HCT116 (cell line): ENCODE measurements at regions of chr10 and their contacts with region 1.

Region 1: DNA sequence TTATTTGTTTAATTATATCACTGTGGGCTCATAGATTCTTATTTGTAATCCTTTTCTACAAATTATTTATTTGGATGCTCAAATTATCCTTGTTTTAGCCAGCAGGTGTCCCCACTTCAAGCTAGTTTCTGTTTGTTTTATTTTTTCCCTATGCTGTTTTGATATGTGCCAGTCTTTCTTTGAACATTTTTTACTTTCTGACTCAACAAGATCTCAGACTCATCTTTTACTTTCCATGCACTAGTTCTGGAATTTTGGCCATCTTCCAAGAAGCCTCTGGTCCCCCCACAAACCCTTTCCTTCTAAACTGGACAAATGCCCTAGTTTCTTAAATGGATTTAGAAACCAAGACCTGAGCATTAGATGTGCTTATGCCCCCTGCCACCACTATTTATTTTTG is 11.5 kb upstream of the MRPS16 start:
- DNase-seq: no peak
- ATAC-seq: peak; percentile 35; the same call in 1 of the 2 replicates
- H3K4me3 ChIP-seq: no peak overlapping the region
- H3K27ac ChIP-seq: no peak overlapping the region
- H3K4me1 ChIP-seq: peaks cover 13 to 23% of the 10 kb centered on the region in 2 experiments
- H3K27me3 ChIP-seq: no peaks in the 10 kb centered on the region
- CTCF ChIP-seq: peak; percentile 51 to 71 (median 52); a peak in 4 of 6 replicates
- POLR2A ChIP-seq: no peak
- RAD21 ChIP-seq: peak; percentile 72

Region 2: GRCh38 chr10:72913287-72913686 is 350.7 kb before region 1 on chr10:
- CTCF ChIA-PET with region 1: no interaction called
- POLR2A ChIA-PET with region 1: no interaction called
- RAD21 ChIA-PET with region 1: no interaction called
- intact Hi-C with region 1: no loop called
- DNase-seq: no peak
- ATAC-seq: no peak
- H3K4me3 ChIP-seq: no peak overlapping the region
- H3K27ac ChIP-seq: no peak overlapping the region
- H3K4me1 ChIP-seq: no peaks in the 10 kb centered on the region
- H3K27me3 ChIP-seq: no peaks in the 10 kb centered on the region
- CTCF ChIP-seq: no peak
- POLR2A ChIP-seq: no peak
- RAD21 ChIP-seq: no peak

Region 3: GRCh38 chr10:73239908-73240307 is 24.0 kb before region 1 on chr10:
- CTCF ChIA-PET with region 1: no interaction called
- POLR2A ChIA-PET with region 1: no interaction called
- RAD21 ChIA-PET with region 1: no interaction called
- intact Hi-C with region 1: no loop called
- DNase-seq: no peak
- ATAC-seq: no peak
- H3K4me3 ChIP-seq: no peak overlapping the region
- H3K27ac ChIP-seq: no peak overlapping the region
- H3K4me1 ChIP-seq: no peaks in the 10 kb centered on the region
- H3K27me3 ChIP-seq: no peaks in the 10 kb centered on the region
- CTCF ChIP-seq: no peak
- POLR2A ChIP-seq: no peak
- RAD21 ChIP-seq: no peak

Region 4: GRCh38 chr10:73252445-73253224 is 11.3 kb before region 1 on chr10 and contains the start of gene MRPS16:
- CTCF ChIA-PET with region 1: interaction called, 5 read pairs
- POLR2A ChIA-PET with region 1: interaction called, 16 read pairs
- RAD21 ChIA-PET with region 1: no interaction called
- intact Hi-C with region 1: no loop called
- DNase-seq: peak; percentile 93
- ATAC-seq: peak; percentile 79
- H3K4me3 ChIP-seq: peak within 1 kb of the TSS; percentile 83 to 100
- H3K27ac ChIP-seq: peak within 1 kb of the TSS; percentile 69
- H3K4me1 ChIP-seq: peaks cover 17 to 39% of the 10 kb centered on the region in 2 experiments
- H3K27me3 ChIP-seq: no peaks in the 10 kb centered on the region
- CTCF ChIP-seq: no peak
- POLR2A ChIP-seq: peak; percentile 95
- RAD21 ChIP-seq: no peak
- total RNA-seq, gene MRPS16: 122 TPM

Region 5: DNA sequence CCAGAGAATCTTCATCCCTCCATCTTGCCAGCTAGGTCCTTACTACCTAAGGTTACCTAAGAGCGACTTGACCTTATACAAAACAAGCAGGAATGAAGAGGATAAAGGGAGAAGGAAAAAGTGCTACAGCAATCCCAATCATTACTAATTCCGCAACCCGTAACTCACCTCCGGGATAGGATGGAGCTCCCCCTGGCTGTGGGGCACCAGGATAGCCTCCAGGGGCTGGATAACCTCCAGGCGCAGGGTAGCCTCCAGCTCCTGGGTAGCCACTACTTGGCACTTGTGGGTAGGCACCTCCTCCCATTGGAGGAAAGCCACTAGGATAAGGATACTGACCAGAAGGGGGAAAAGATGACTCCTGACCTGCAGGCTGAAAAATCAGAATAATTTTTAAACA is 134.1 kb after region 1 on chr10:
- CTCF ChIA-PET with region 1: interaction called, 3 read pairs
- POLR2A ChIA-PET with region 1: no interaction called
- RAD21 ChIA-PET with region 1: no interaction called
- intact Hi-C with region 1: loop called (anchors 10 kb)
- DNase-seq: no peak
- ATAC-seq: peak; percentile 89
- H3K4me3 ChIP-seq: no peak overlapping the region
- H3K27ac ChIP-seq: no peak overlapping the region
- H3K4me1 ChIP-seq: no peaks in the 10 kb centered on the region
- H3K27me3 ChIP-seq: no peaks in the 10 kb centered on the region
- CTCF ChIP-seq: peak; percentile 22 to 71 (median 64); a peak in 4 of 6 replicates
- POLR2A ChIP-seq: no peak
- RAD21 ChIP-seq: peak; percentile 45; the same call in 1 of the 2 replicates

Region 6: GRCh38 chr10:73495884-73496674 is 232.1 kb after region 1 on chr10 and contains the start of gene PPP3CB:
- CTCF ChIA-PET with region 1: no interaction called
- POLR2A ChIA-PET with region 1: no interaction called
- RAD21 ChIA-PET with region 1: no interaction called
- intact Hi-C with region 1: loop called (anchors 5 kb)
- DNase-seq: peak; percentile 94
- ATAC-seq: peak; percentile 87
- H3K4me3 ChIP-seq: peak within 1 kb of the TSS; percentile 94 to 98
- H3K27ac ChIP-seq: peak within 1 kb of the TSS; percentile 97
- H3K4me1 ChIP-seq: peaks cover 13 to 21% of the 10 kb centered on the region in 2 experiments; a peak in 3 of 4 replicates
- H3K27me3 ChIP-seq: no peaks in the 10 kb centered on the region
- CTCF ChIP-seq: no peak
- POLR2A ChIP-seq: no peak
- RAD21 ChIP-seq: no peak
- total RNA-seq, gene PPP3CB: 32.0 TPM

Region 7: DNA sequence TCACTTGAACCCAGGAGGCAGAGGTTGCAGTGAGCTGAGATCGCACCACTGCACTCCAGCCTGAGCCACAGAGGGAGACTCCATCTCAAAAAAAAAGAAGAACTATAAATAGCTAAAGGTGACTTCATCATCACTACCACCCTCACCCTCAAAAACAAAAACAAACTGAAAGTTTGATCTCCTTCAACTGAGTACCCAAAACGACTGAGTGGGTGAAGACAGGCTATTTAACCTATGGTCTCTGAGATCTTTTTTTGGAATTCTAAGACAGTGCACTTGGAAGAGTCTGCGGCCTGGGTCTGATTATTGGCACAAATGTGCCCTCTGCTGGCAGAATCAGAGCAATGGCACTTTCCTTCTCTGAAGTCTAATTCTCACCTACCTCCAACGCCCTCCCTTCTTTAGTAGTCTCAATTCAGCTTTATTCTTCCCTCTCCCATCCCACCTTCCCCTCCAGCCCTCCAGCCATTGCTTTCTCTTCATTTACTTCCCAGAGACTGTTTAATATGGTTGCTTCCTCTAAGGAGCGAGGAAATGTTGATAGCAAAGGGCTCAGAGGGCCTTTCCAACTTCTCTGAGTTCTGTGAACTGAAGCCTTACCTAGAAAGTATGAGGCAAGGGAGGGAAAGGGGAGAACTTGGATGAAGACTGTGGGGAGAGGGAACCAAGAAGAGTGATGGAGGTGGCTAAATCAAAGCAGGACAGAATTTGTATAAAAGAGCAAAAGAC is 380.2 kb after region 1 on chr10:
- CTCF ChIA-PET with region 1: interaction called, 6 read pairs
- POLR2A ChIA-PET with region 1: no interaction called
- RAD21 ChIA-PET with region 1: interaction called in 1 of 2 experiments, 3 read pairs
- intact Hi-C with region 1: loop called (anchors 5 kb)
- DNase-seq: peak; percentile 58
- ATAC-seq: peak; percentile 93
- H3K4me3 ChIP-seq: no peak overlapping the region
- H3K27ac ChIP-seq: no peak overlapping the region
- H3K4me1 ChIP-seq: peaks cover 0 to 9% of the 10 kb centered on the region in 2 experiments; a peak in 3 of 4 replicates
- H3K27me3 ChIP-seq: no peaks in the 10 kb centered on the region
- CTCF ChIP-seq: peak; percentile 75 to 93 (median 87)
- POLR2A ChIP-seq: no peak
- RAD21 ChIP-seq: peak; percentile 99